ENCODE measurements at regions of chr14 and their contacts with region 1.

Region 1: GRCh38 chr14:70907176-70907995 is at the start of gene PCNX1:
- DNase-seq: peak; percentile 93
- ATAC-seq: peak; percentile 86
- H3K4me3 Mint-ChIP-seq: peak within 1 kb of the TSS; percentile 82
- H3K27ac Mint-ChIP-seq: peak within 1 kb of the TSS; percentile 93
- H3K4me1 Mint-ChIP-seq: peaks cover 56% of the 10 kb centered on the region
- H3K27me3 Mint-ChIP-seq: no peaks in the 10 kb centered on the region
- total RNA-seq, gene PCNX1: 67.8 to 68.9 TPM

Region 2: GRCh38 chr14:70707138-70708038 is 200.0 kb before region 1 on chr14:
- CTCF ChIA-PET with region 1: no interaction called
- POLR2A ChIA-PET with region 1: no interaction called
- DNase-seq: no peak
- ATAC-seq: no peak
- H3K4me3 Mint-ChIP-seq: no peak overlapping the region
- H3K27ac Mint-ChIP-seq: no peak overlapping the region
- H3K4me1 Mint-ChIP-seq: peaks cover 4% of the 10 kb centered on the region
- H3K27me3 Mint-ChIP-seq: peaks cover 7% of the 10 kb centered on the region

Region 3: DNA sequence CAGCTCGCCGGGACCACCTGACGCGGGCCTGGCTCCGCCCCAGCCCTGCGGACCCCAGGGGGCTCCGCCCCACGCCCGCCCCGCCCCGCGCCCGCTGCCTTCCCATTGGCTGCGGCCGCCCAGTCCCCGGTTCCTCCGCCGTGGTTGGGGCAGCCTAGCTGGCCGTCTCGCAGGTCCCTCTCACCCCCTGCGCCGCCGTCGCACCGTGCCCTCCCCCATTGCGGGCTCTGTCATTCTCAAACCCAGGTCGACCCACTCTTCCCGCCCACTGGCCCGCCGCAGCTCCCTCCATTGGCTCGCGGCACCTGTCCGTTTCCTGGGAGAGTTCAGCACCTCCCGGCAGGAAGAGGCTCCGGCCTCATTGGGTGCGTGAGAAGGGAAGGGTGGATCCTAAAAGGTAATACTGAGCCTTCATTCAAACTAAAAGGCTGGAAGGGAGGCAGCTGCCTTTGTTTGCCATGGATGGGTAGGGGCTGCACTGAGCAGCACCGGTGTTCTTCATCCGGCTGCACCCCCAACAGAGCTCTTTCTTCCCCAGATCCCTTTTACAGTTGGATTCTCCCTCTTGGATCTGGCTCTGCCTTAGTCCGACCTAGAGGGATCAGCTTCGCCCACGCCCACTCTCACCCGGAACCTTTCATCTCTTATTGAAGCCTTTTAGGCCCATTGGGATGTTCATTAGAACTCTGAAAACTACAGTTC is 97.7 kb before region 1 on chr14:
- CTCF ChIA-PET with region 1: interaction called, 13 read pairs
- POLR2A ChIA-PET with region 1: interaction called, 7 read pairs
- DNase-seq: peak; percentile 97
- ATAC-seq: peak; percentile 90
- H3K4me3 Mint-ChIP-seq: no peak overlapping the region
- H3K27ac Mint-ChIP-seq: no peak overlapping the region
- H3K4me1 Mint-ChIP-seq: peaks cover 15% of the 10 kb centered on the region
- H3K27me3 Mint-ChIP-seq: peaks cover 2% of the 10 kb centered on the region

Region 4: GRCh38 chr14:70821584-70822529 is 85.5 kb before region 1 on chr14:
- CTCF ChIA-PET with region 1: interaction called, 73 read pairs
- POLR2A ChIA-PET with region 1: interaction called, 4 read pairs
- DNase-seq: peak; percentile 65
- ATAC-seq: peak; percentile 69
- H3K4me3 Mint-ChIP-seq: peak overlapping the region; percentile 81
- H3K27ac Mint-ChIP-seq: no peak overlapping the region
- H3K4me1 Mint-ChIP-seq: peaks cover 37% of the 10 kb centered on the region
- H3K27me3 Mint-ChIP-seq: peaks cover 31% of the 10 kb centered on the region

Region 5: GRCh38 chr14:70887207-70887681 is 20.1 kb before region 1 on chr14:
- CTCF ChIA-PET with region 1: interaction called, 187 read pairs
- POLR2A ChIA-PET with region 1: interaction called, 53 read pairs
- DNase-seq: no peak
- ATAC-seq: peak; percentile 28
- H3K4me3 Mint-ChIP-seq: peak overlapping the region; percentile 64
- H3K27ac Mint-ChIP-seq: peak overlapping the region; percentile 92
- H3K4me1 Mint-ChIP-seq: peaks cover 97% of the 10 kb centered on the region
- H3K27me3 Mint-ChIP-seq: no peaks in the 10 kb centered on the region

Region 6: DNA sequence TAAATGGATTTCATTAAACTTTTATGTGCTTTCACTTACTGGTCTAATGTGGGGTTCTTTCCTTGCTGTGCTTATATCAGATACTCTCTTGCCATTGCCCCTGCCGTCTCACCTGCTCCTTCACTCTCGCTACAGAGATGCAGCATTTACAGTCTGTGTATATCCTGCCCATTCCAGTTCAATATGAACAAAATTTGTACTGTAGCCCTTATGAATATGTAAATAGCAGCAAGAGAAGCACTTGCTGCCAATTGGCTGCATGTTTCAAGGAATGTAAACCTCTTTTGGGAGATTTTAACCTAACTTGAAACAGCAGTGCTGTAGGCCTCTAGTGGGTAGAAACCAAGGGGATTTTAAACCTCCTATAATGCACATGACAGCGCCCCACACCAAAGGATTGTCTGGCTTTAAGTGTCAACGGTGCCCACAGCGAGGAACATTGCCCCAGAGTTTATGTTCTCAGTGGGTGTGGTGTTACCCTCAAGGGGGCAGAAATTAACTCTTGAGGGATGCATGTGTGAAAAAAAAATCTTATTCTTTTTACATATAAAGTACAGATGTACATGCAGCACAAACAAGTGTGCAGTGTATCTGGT is 18.9 kb after region 1 on chr14:
- CTCF ChIA-PET with region 1: interaction called, 51 read pairs
- POLR2A ChIA-PET with region 1: interaction called, 4 read pairs
- DNase-seq: no peak
- ATAC-seq: peak; percentile 43
- H3K4me3 Mint-ChIP-seq: no peak overlapping the region
- H3K27ac Mint-ChIP-seq: peak overlapping the region; percentile 9
- H3K4me1 Mint-ChIP-seq: peaks cover 45% of the 10 kb centered on the region
- H3K27me3 Mint-ChIP-seq: no peaks in the 10 kb centered on the region

Region 7: DNA sequence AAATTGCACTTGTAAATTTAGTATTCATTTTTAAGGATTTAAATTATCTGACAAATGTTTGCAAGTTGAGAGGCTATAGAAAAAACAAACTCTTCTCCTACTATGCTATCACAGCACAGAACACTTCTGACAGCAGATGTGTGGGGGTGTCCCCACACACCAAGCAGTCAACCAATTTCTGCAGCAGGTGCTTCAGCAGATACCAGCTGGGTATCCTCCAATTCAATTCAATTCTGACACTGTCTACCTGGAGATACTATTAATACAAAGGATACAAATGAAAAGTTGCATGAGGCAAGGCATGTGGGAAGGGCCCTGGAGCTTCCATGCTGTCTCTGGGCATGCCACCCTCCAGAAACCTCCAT is 34.9 kb after region 1 on chr14:
- CTCF ChIA-PET with region 1: interaction called, 26 read pairs
- POLR2A ChIA-PET with region 1: interaction called, 10 read pairs
- DNase-seq: no peak
- ATAC-seq: no peak
- H3K4me3 Mint-ChIP-seq: no peak overlapping the region
- H3K27ac Mint-ChIP-seq: no peak overlapping the region
- H3K4me1 Mint-ChIP-seq: peaks cover 52% of the 10 kb centered on the region
- H3K27me3 Mint-ChIP-seq: no peaks in the 10 kb centered on the region

Region 8: DNA sequence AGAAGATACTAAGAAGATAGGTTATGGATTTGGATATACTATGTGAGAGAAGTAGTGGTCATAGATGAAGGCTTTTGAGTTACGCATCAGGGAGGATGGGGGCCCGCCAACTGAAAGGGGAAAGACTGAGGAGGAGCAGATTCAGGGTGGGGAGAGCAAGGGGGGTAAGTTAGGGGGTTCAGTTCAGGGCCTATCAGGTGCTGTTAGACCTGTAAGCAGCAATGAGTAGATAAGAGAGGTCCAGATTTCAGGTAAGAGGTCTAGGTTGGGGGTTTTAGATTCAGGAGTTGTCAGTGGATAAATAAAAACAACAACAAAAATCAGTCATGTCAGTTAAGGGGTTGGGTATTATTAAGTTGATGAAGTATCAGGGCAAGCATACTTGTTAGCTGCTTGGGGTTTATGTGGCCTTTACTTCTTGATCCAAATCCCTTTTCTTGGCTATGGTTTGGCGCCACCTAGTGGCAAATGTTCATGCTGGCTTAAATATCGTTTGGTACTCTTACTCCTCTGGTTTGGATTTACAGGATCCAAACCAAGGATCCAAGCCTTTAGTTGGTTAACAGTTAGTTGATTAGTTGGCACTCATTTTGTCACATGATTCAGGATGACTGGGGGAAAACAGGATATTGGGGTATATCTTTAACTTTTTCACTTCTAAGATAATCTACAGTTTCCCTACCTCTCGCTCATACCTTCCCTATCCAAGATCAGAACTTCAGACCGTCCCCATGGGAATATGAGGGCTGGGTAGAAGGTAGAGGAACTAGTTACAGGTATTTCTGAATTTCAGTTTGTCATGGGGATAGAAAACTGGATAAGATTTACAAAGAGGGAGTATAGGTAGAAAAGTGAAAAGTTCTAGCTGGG is 65.0 kb after region 1 on chr14:
- CTCF ChIA-PET with region 1: interaction called, 40 read pairs
- POLR2A ChIA-PET with region 1: interaction called, 4 read pairs
- DNase-seq: peak; percentile 90
- ATAC-seq: peak; percentile 81
- H3K4me3 Mint-ChIP-seq: no peak overlapping the region
- H3K27ac Mint-ChIP-seq: peak overlapping the region; percentile 54
- H3K4me1 Mint-ChIP-seq: peaks cover 23% of the 10 kb centered on the region
- H3K27me3 Mint-ChIP-seq: no peaks in the 10 kb centered on the region

Measured in activated CD8-positive, alpha-beta T cell treated with anti-CD3 and anti-CD28 coated beads, Interleukin-2, amount 10 ng/mL, durations not matched to agents 7 days and 5 days (primary cell).